GM18951 (cell line): ENCODE measurements at regions of chr4 and their contacts with region 1.

Region 1: GRCh38 chr4:108168671-108169523 is at the start of gene LEF1:
- POLR2A ChIP-seq: peak; percentile 11

Region 2: DNA sequence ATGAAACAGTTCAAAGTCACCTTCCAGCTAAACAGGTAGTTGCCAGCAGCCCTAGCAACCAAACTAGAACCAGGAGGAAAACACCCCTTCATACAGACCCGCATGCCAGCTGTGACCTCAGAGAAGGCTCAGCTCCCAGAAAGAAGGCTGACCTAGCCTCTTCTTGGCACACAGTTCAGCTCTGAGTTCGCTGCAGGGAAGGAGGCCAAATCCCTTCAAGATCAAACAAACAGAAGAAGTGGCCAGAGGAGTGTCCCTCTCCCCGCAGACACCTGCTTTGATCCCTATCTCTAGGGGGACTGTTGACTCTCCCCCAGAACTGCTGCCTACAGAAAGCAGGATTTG is 123.2 kb before region 1 on chr4:
- in situ Hi-C with region 1: loop called (anchors 10 kb)
- POLR2A ChIP-seq: no peak